PC-3 (cell line): ENCODE measurements at regions of chr17 and their contacts with region 1.

Region 1: DNA sequence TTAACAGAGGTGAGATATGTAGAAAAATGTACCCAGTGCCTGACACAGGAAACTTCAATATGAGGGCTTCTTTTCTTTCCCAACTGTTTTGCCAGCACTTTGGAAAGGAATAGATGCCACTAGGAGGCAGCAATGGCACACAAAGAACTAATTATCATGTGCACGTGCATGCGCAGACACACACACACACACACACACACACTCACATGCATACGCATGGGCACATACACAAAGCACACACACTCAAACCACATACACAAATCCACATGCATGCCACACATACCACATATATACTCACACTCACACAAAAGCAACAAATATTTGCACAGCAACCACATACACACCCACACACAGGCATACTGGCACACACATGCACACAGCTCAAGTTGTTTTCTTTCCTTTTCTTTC is 8.8 kb upstream of the CEP112 start:
- DNase-seq: peak; percentile 82
- ATAC-seq: peak; percentile 65
- H3K4me3 ChIP-seq: peak overlapping the region; percentile 4; the same call in 1 of the 2 replicates
- H3K27ac ChIP-seq: no peak overlapping the region
- H3K4me1 ChIP-seq: peaks cover 8% of the 10 kb centered on the region
- H3K27me3 ChIP-seq: no peaks in the 10 kb centered on the region
- CTCF ChIP-seq: peak; percentile 95

Region 2: GRCh38 chr17:66177048-66177447 is 23.6 kb before region 1 on chr17:
- CTCF ChIA-PET with region 1: no interaction called
- POLR2A ChIA-PET with region 1: no interaction called
- intact Hi-C with region 1: no loop called
- DNase-seq: peak; percentile 90
- ATAC-seq: peak; percentile 100
- H3K4me3 ChIP-seq: no peak overlapping the region
- H3K27ac ChIP-seq: no peak overlapping the region
- H3K4me1 ChIP-seq: peaks cover 16% of the 10 kb centered on the region
- H3K27me3 ChIP-seq: no peaks in the 10 kb centered on the region
- CTCF ChIP-seq: no peak

Region 3: GRCh38 chr17:66240630-66241029 is 39.9 kb after region 1 on chr17:
- CTCF ChIA-PET with region 1: no interaction called
- POLR2A ChIA-PET with region 1: no interaction called
- intact Hi-C with region 1: loop called (anchors 2 kb)
- DNase-seq: peak; percentile 86
- ATAC-seq: peak; percentile 89
- H3K4me3 ChIP-seq: no peak overlapping the region
- H3K27ac ChIP-seq: peak overlapping the region; percentile 15
- H3K4me1 ChIP-seq: peaks cover 16% of the 10 kb centered on the region
- H3K27me3 ChIP-seq: no peaks in the 10 kb centered on the region
- CTCF ChIP-seq: no peak

Region 4: GRCh38 chr17:66290101-66290722 is 89.5 kb after region 1 on chr17:
- CTCF ChIA-PET with region 1: no interaction called
- POLR2A ChIA-PET with region 1: no interaction called
- intact Hi-C with region 1: no loop called
- DNase-seq: no peak
- ATAC-seq: peak; percentile 55; the same call in 1 of the 2 replicates
- H3K4me3 ChIP-seq: no peak overlapping the region
- H3K27ac ChIP-seq: no peak overlapping the region
- H3K4me1 ChIP-seq: no peaks in the 10 kb centered on the region
- H3K27me3 ChIP-seq: no peaks in the 10 kb centered on the region
- CTCF ChIP-seq: peak; percentile 47

Region 5: DNA sequence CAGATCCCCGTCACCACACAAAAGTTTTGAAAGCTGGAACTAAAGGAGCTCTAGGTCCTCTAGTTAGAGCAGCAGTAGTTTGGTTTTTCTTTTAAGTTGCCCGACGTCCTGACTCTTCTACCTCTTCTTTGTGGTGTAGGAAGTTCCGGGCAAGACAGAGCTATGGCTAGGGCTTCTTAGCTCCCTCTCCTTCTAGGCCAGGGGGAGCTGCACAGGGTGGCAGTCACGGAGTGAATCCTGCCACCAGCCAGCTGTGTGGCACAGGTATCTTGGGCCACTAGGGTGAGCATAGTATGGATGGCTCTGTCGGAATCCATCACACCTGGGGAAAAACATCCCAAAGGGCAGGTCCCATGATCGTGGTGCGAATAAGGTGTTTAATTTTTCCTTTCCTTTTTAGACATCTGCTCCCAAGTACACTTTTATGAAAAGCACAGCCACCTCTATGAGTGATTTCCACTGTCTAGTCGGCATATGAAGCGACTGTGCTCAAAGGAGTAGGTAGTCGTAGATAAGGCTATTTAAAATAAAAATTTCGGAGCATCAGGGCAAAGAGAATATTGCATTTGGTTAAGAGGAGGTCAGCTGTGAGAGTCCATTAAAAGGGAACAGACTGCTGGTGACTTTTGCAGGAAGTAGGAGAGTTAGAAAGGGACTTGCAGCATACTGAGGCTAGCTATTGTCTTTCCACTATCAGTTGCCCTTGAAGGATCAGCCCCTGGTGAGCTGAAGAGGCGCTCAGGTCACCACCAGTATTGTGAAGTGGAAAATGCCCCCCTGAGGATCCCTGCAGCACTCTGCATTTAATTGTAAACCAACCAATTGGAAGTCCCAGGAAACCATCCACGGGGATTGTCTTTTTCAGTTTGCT is 103.8 kb after region 1 on chr17:
- CTCF ChIA-PET with region 1: no interaction called
- POLR2A ChIA-PET with region 1: no interaction called
- intact Hi-C with region 1: no loop called
- DNase-seq: peak; percentile 59
- ATAC-seq: peak; percentile 27
- H3K4me3 ChIP-seq: peak overlapping the region; percentile 87
- H3K27ac ChIP-seq: peak overlapping the region; percentile 6; the same call in 1 of the 2 replicates
- H3K4me1 ChIP-seq: peaks cover 46% of the 10 kb centered on the region
- H3K27me3 ChIP-seq: no peaks in the 10 kb centered on the region
- CTCF ChIP-seq: peak; percentile 46; the same call in 1 of the 2 replicates